Activated B cell treated with CpG ODN at 0.5 μM for 24 hours (primary cell): ENCODE measurements at regions of chr1 and their contacts with region 1.

Region 1: DNA sequence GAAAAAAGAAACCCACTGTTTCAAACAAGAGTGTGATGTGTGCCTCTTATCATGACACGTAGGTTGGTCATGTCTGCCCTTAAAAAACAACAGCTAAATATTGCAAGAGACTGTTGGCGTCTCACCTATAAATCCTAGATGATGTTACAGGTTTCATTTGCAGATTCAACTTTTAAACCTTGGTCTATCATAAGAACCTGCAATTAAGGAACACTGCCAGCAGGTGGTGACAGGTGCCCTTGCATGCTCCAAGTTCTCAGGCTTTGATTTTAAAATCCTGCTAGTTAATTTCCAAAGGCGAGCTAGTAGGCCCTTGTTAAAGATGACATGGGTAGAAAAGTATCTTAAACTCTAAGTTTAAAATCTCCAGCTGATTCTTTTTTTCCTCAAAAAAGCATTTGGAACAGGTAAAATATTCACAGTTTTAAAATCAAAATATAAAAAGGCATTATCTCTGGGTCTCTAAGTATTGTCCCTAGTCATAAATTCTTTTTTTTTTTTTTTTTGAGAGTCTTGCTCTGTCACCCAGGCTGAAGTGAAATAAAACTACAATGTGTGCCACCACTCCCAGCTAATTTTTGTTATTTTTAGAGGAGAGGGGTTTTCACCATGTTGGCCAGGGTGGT is 39.1 kb downstream of the CLSTN1 start:
- DNase-seq: no peak
- ATAC-seq: peak; percentile 47
- H3K4me3 Mint-ChIP-seq: no peak overlapping the region
- H3K27ac Mint-ChIP-seq: no peak overlapping the region
- H3K4me1 Mint-ChIP-seq: peaks cover 33% of the 10 kb centered on the region
- H3K27me3 Mint-ChIP-seq: no peaks in the 10 kb centered on the region
- CTCF ChIP-seq: peak; percentile 68

Region 2: GRCh38 chr1:9466780-9467758 is 317.6 kb before region 1 on chr1:
- CTCF ChIA-PET with region 1: no interaction called
- POLR2A ChIA-PET with region 1: interaction called, 13 read pairs
- intact Hi-C with region 1: no loop called
- DNase-seq: no peak
- ATAC-seq: no peak
- H3K4me3 Mint-ChIP-seq: no peak overlapping the region
- H3K27ac Mint-ChIP-seq: no peak overlapping the region
- H3K4me1 Mint-ChIP-seq: no peaks in the 10 kb centered on the region
- H3K27me3 Mint-ChIP-seq: peaks cover 14% of the 10 kb centered on the region
- CTCF ChIP-seq: no peak

Region 3: GRCh38 chr1:9615316-9616063 is 169.1 kb before region 1 on chr1:
- CTCF ChIA-PET with region 1: interaction called, 6 read pairs
- POLR2A ChIA-PET with region 1: no interaction called
- intact Hi-C with region 1: loop called (anchors 5 kb)
- DNase-seq: peak; percentile 47
- ATAC-seq: peak; percentile 96
- H3K4me3 Mint-ChIP-seq: no peak overlapping the region
- H3K27ac Mint-ChIP-seq: no peak overlapping the region
- H3K4me1 Mint-ChIP-seq: peaks cover 4% of the 10 kb centered on the region
- H3K27me3 Mint-ChIP-seq: no peaks in the 10 kb centered on the region
- CTCF ChIP-seq: peak; percentile 43

Region 4: DNA sequence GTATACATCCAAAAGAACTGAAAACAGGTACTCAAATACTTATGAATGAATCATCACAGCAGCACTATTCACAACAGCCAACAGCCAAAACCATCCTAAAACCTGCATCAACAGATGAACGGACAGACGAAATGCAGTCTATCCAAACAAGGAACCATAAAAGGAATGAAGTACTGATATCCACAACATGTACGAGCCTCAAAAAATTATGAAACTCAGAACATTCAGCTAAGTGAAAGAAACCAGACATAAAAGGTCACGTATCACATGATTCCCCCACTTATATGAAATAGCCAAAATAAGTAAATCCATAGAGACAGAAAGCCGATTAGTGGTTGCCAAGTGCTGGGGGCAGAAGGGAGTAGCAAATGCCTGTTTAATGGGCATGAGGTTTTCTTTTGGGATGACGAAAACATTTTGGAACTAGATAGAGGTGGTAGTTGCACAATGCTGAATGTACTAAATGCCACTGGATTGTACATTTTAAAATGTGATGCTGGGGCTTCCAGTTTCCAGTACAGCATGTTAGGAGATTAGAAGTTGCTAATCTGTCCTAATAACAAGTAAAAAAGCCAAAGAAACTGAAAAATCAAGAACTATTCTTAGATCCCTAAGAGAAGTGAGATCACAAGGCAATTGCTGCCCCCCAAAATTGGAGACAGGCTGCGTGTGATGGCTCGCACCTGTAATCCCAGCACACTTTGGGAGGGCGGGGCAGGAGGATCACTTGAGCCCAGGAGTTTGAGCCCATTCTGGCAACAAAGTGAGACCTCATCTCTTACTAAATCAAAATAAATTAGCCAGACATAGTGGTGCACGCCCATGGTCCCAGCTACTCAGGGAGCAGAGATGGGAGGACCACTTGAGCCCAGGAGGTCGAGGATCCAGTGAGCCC is 13.9 kb after region 1 on chr1:
- CTCF ChIA-PET with region 1: interaction called, 16 read pairs
- POLR2A ChIA-PET with region 1: interaction called, 6 read pairs
- intact Hi-C with region 1: loop called (anchors 1 kb)
- DNase-seq: no peak
- ATAC-seq: no peak
- H3K4me3 Mint-ChIP-seq: no peak overlapping the region
- H3K27ac Mint-ChIP-seq: no peak overlapping the region
- H3K4me1 Mint-ChIP-seq: peaks cover 46% of the 10 kb centered on the region
- H3K27me3 Mint-ChIP-seq: no peaks in the 10 kb centered on the region
- CTCF ChIP-seq: no peak

Region 5: DNA sequence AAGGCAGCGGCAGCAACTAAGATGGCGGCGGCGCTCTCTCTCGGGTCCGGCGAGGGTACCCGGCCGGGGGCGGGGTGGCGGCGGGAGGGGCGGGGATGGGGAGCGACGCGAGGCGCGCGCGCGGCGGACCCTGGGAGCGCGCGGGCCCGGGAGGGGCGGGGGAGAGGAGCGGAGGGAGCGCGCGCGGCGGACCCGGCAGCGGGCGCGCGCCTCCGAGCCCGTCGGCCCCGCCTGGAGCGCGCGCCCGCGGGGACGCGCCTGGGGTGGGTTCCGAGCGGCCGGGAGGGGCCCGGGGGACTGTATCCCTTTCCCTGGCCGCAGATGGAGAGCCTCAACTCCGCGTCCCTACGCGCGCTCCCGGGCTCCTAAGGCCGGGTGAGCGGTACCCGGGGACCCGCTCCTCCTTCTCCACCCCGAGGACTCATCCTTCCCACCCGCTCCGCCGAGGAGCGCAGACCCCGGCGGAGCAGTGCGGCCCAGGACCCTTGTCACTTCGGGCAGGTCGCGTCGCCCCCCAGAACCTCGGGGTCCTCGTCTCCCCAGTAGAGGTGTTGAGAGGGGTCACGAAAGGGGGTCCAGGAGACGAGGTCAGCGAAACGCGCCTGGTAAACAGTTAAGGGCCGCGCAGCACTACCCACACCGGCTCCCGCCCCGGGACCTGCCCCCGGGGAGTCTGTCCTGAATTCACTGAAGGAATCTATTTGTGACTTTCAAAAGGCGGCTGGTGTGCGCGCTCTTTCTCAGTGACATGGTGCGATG is 39.5 kb after region 1 on chr1 and contains the start of gene CLSTN1:
- CTCF ChIA-PET with region 1: interaction called, 12 read pairs
- POLR2A ChIA-PET with region 1: interaction called, 6 read pairs
- intact Hi-C with region 1: loop called (anchors 1 kb)
- DNase-seq: peak; percentile 82
- ATAC-seq: peak; percentile 82
- H3K4me3 Mint-ChIP-seq: peak within 1 kb of the TSS; percentile 92
- H3K27ac Mint-ChIP-seq: peak within 1 kb of the TSS; percentile 82
- H3K4me1 Mint-ChIP-seq: peaks cover 55% of the 10 kb centered on the region
- H3K27me3 Mint-ChIP-seq: no peaks in the 10 kb centered on the region
- CTCF ChIP-seq: no peak
- total RNA-seq, gene CLSTN1: 50.7 and 52.2 TPM in 2 replicates

Region 6: GRCh38 chr1:9861360-9861759 is 76.7 kb after region 1 on chr1:
- CTCF ChIA-PET with region 1: interaction called, 156 read pairs
- POLR2A ChIA-PET with region 1: interaction called, 6 read pairs
- intact Hi-C with region 1: no loop called
- DNase-seq: no peak
- ATAC-seq: no peak
- H3K4me3 Mint-ChIP-seq: no peak overlapping the region
- H3K27ac Mint-ChIP-seq: no peak overlapping the region
- H3K4me1 Mint-ChIP-seq: peaks cover 2% of the 10 kb centered on the region
- H3K27me3 Mint-ChIP-seq: no peaks in the 10 kb centered on the region
- CTCF ChIP-seq: no peak

Region 7: DNA sequence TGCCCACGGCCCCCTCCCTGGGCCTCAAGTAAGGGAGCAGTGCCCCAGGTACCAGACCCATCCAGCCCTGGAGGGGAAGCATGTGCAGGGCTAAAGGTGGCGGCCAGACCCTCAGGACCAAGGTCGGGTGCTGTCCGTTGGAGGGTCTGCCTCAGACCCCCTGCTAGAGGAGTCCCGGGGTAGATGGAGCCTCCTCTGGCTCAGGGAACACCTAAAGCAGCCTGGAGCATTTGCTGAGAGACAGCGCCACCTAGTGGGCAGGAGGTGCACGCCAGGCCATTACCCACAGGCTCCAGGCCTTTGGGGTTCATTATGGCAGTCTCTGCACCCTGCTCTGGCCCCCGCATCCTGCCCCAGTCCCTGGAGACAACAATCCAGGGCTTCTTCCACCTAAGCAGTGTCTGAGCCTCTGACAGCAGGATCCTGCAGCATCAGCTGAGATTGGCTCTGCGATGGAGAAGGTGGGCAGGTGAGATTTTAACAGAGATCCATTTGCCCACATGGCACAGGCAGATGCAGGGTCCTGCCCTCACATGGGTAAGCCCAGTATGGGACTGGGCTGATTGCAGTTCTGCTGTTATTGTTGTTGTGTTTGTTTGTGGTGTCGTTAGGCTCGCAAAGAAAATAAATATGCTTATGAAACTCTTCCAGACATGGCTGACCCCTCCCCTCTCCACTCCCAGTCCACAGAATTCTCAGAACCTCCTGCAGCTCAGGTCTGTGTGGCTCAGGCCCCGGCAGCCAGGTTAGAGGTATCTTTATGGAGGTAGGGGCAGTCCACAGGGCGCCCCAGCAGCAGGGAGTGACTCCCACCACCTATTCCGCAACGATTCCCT is 83.0 kb after region 1 on chr1:
- CTCF ChIA-PET with region 1: interaction called, 156 read pairs
- POLR2A ChIA-PET with region 1: interaction called, 6 read pairs
- intact Hi-C with region 1: loop called (anchors 1 kb)
- DNase-seq: peak; percentile 79
- ATAC-seq: peak; percentile 97
- H3K4me3 Mint-ChIP-seq: no peak overlapping the region
- H3K27ac Mint-ChIP-seq: no peak overlapping the region
- H3K4me1 Mint-ChIP-seq: no peaks in the 10 kb centered on the region
- H3K27me3 Mint-ChIP-seq: no peaks in the 10 kb centered on the region
- CTCF ChIP-seq: peak; percentile 24